Activated naive CD4-positive, alpha-beta T cell treated with anti-CD3 and anti-CD28 coated beads for 36 hours (primary cell): ENCODE measurements at regions of chr4 and their contacts with region 1.

Region 1: DNA sequence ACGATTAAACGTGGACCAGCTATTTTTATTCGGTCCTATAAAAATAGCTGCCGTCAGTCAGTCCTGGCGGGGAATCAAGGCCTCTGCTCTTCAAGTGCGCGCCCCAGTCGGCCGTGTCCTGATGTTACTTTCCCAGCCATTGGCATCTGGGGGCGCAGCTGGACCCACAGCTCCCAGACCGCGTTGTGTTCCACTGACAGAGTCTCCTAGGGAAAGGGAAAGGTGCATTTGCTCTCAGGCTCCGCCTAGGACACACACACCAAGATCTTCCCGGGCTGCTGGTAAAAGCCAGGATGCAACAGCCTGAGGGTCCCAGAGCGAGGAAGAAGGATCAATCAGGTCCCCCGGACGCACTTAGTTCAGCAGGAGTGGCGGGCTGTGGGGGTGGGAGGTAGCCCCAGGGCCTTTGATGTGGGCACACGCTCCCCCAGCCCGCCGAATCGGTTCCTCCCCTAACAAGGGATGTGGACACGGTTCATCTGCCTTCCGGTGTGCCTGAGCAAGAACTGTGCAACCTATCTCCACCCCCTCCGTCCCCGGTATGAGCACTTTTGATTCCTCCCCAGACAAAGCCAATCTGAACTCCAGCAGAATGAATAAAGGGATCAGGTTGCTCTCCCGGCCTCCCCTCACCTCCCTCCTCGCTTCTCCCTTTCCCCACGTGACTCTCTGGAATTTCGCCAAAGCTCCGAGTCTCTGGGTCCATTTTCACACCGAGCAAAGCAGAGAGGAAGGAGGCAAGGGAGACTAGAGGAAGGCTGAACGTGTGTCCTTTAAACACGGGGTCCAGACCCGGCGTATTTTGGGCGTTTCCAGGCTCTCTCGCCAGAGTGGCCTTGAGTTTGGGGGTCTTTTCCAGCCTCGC is 626 bp upstream of the FRAS1 start:
- DNase-seq: peak; percentile 50
- H3K4me3 Mint-ChIP-seq: peak overlapping the region; percentile 65
- H3K27ac Mint-ChIP-seq: no peak overlapping the region
- H3K4me1 Mint-ChIP-seq: peaks cover 21% of the 10 kb centered on the region
- H3K27me3 Mint-ChIP-seq: peaks cover 41% of the 10 kb centered on the region

Region 2: DNA sequence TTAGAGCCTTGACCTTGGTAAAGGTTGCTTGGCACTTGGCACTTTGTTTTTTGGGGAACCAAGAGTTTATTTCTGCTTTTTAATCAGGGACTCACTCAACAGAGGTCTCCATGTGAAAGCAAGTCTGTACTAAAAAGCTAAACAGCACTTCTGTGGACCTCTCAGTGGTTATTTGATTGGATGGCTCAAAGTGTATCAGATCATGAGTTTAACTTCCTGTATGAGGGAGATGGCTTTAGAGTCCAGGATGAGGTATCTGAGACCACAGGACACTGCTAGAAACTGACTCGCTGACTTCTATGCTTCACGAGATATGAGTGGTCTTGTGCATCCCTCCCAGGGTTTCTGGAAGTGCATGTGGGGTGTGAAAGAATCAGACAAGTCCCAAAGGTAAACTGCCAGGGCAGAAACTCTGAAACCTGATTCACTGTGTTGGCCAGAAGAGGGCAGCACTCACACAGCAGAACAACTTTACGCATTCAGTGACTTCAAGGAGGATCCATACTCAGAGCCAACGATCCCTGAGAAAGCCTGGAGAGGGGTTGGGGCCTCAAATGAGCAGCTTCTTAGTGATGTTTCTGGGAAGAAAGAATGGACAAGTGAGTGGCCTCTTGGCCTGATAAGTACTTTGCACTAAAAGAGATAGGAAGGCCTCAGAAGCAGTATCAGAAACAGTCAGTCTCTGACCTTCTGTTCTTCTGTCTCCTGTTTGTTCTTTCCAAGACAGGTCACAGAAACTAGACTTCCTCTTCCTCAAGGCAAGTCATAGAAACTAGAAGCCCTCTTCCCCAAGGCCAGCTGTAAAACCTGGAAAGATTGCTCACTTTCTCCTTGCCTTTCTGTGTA is 671.1 kb before region 1 on chr4:
- CTCF ChIA-PET with region 1: no interaction called
- intact Hi-C with region 1: no loop called
- DNase-seq: peak; percentile 78
- H3K4me3 Mint-ChIP-seq: no peak overlapping the region
- H3K27ac Mint-ChIP-seq: no peak overlapping the region
- H3K4me1 Mint-ChIP-seq: no peaks in the 10 kb centered on the region
- H3K27me3 Mint-ChIP-seq: no peaks in the 10 kb centered on the region

Region 3: DNA sequence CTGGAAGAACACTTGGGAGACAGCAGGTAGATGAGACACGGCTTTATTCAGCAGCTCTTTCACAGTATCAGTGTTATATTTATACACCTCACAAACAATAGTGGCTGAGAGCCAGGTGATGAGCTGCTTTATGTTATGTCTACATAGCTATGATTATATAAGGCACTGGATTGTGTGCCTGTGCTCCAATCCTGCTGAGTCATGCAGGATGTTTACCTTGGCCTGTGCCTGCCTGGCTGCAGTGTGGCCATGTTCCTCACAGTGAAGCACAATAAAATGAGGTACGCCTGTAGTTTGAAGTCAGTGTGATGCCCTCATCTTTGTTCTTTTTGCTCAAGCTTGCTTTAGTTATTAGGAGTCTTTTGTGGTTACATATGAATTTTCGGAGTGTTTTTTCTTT is 419.6 kb before region 1 on chr4:
- CTCF ChIA-PET with region 1: no interaction called
- intact Hi-C with region 1: loop called (anchors 10 kb)
- DNase-seq: no peak
- H3K4me3 Mint-ChIP-seq: no peak overlapping the region
- H3K27ac Mint-ChIP-seq: no peak overlapping the region
- H3K4me1 Mint-ChIP-seq: no peaks in the 10 kb centered on the region
- H3K27me3 Mint-ChIP-seq: peaks cover 2% of the 10 kb centered on the region

Region 4: GRCh38 chr4:77785669-77786068 is 270.8 kb before region 1 on chr4:
- CTCF ChIA-PET with region 1: no interaction called
- intact Hi-C with region 1: no loop called
- DNase-seq: no peak
- H3K4me3 Mint-ChIP-seq: no peak overlapping the region
- H3K27ac Mint-ChIP-seq: peak overlapping the region; percentile 30
- H3K4me1 Mint-ChIP-seq: peaks cover 67% of the 10 kb centered on the region
- H3K27me3 Mint-ChIP-seq: no peaks in the 10 kb centered on the region

Region 5: GRCh38 chr4:77959566-77960338 is 96.7 kb before region 1 on chr4:
- CTCF ChIA-PET with region 1: interaction called, 4 read pairs
- intact Hi-C with region 1: loop called (anchors 1 kb)
- DNase-seq: no peak
- H3K4me3 Mint-ChIP-seq: no peak overlapping the region
- H3K27ac Mint-ChIP-seq: no peak overlapping the region
- H3K4me1 Mint-ChIP-seq: peaks cover 16% of the 10 kb centered on the region
- H3K27me3 Mint-ChIP-seq: no peaks in the 10 kb centered on the region